ENCODE measurements at regions of chr4 and their contacts with region 1.

Region 1: DNA sequence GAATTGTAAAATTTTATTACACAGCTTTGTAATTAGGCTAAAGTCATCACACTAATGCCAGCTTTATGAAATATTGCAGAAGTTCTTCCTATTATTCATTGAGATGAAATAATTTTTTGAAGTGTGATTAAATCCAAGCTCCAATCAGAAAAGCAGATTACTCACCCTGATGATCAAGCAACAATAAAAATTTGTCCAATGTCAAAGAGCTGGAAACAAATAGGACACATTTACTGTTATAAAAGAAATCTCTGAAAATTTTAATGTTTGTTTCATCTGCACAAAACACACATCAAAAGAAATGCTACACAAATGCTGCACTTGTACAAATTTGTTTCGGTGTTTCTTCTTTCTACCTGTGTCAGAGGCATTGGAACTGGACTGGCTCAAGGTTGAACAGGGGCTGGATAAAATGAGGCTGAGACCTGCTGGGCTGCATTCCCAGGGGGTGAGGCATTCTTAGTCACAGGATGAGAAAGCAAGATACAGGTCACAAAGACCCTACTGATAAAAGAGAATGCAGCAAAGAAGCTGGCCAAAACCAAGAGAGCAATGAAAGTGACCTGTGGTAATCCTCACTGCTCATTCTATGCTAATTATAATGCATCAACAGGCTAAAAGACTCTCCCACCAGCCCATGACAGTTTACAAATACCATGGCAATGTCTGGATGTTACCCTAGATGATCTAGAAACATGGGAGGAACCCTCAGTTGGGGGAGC is 78.3 kb downstream of the GASK1B start:
- DNase-seq: peak; percentile 90 to 92
- H3K4me3 ChIP-seq: peak overlapping the region; percentile 44; the same call in 1 of the 2 replicates
- H3K27ac ChIP-seq: peak overlapping the region; percentile 94
- H3K4me1 ChIP-seq: peaks cover 36% of the 10 kb centered on the region
- H3K27me3 ChIP-seq: no peaks in the 10 kb centered on the region
- CTCF ChIP-seq: no peak

Region 2: GRCh38 chr4:158020176-158020575 is 74.4 kb before region 1 on chr4:
- CTCF ChIA-PET with region 1: no interaction called
- POLR2A ChIA-PET with region 1: no interaction called
- intact Hi-C with region 1: loop called (anchors 1 kb)
- DNase-seq: peak in 1 of 2 experiments; percentile 8
- H3K4me3 ChIP-seq: no peak overlapping the region
- H3K27ac ChIP-seq: peak overlapping the region; percentile 48
- H3K4me1 ChIP-seq: peaks cover 34% of the 10 kb centered on the region
- H3K27me3 ChIP-seq: no peaks in the 10 kb centered on the region
- CTCF ChIP-seq: no peak

Region 3: DNA sequence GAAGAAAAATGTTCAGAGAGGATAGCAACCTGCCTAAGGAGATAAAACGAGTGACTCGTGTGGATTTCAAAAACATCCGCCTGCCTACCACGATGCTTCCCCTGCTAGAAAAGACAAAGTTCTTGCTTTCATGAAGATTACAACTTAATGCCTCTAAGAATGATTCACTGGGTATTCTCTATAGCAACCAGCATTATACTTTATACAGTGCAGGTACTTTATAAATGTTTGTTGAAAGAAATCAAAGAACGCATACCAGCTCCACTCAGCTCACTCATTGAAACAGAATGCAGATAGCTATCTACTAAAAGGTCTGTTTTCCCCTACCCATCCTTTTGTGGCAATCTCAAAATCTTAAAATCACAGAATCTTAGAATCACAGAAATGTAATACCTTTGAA is 44.5 kb after region 1 on chr4:
- CTCF ChIA-PET with region 1: no interaction called
- POLR2A ChIA-PET with region 1: no interaction called
- intact Hi-C with region 1: loop called (anchors 1 kb)
- DNase-seq: peak in 1 of 2 experiments; percentile 9
- H3K4me3 ChIP-seq: no peak overlapping the region
- H3K27ac ChIP-seq: no peak overlapping the region
- H3K4me1 ChIP-seq: no peaks in the 10 kb centered on the region
- H3K27me3 ChIP-seq: no peaks in the 10 kb centered on the region
- CTCF ChIP-seq: no peak

Region 4: DNA sequence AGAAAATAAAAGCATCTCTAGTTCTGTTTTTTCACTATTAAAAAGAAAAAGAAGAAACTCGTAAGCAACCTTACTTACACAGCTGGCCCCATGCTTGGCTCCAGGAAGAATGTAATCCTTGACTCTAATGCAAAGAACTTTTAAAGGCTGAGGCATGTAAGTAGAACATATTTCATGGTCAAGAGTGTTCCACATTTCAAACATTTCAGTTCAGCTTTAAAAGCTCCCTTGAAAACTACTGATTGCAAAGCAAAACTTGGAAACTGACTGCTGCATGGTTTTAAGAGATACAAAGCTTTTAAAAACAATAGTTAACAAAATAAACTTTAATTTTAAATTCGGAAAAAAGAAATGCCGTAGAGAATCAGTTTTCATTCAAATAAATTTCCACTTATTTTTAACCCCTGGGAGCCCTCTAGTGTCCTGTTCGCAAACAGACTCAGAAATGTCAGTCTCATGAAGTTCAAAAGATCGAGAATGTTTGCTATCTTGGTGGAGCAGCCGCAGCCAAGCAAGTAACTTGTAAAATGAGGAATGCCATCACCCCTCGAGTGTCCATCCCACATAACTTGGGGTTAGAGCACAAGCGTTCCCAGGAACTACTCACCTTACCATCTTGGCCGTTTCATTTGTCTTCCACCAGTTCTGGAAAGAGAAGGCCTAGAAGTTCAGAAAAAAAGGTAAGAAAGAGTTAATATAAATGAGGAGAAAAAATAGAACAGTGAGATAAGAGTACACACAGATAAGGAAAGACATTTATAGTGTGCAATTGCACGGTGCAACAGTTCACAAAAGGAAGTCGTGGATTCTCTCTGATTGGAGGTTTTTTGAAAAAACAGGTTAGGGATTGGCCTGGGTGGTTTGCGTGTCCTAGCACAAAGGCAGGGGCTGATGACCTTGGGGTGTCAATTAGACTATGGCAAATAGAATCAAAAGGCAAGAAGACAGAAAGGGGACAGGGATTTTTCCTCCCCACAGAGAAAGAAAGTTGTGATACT is 78.0 kb after region 1 on chr4 and contains the start of gene GASK1B:
- CTCF ChIA-PET with region 1: interaction called, 3 read pairs
- POLR2A ChIA-PET with region 1: no interaction called
- intact Hi-C with region 1: loop called (anchors 1 kb)
- DNase-seq: peak; percentile 29 to 37
- H3K4me3 ChIP-seq: no peak within 1 kb of the TSS; the same call in 1 of the 2 replicates
- H3K27ac ChIP-seq: no peak within 1 kb of the TSS
- H3K4me1 ChIP-seq: peaks cover 30% of the 10 kb centered on the region
- H3K27me3 ChIP-seq: no peaks in the 10 kb centered on the region
- CTCF ChIP-seq: peak; percentile 76
- total RNA-seq, gene GASK1B: 2.8 and 4.1 TPM in 2 replicates

Measured in PC-9 (cell line).